Activated CD4-positive, alpha-beta T cell treated with anti-CD3 and anti-CD28 coated beads for 36 hours (primary cell): ENCODE measurements at regions of chr16 and their contacts with region 1.

Region 1: GRCh38 chr16:85821441-85822135 is 22.1 kb downstream of the COX4I1 start:
- DNase-seq: peak; percentile 90
- ATAC-seq: peak; percentile 89
- H3K4me3 Mint-ChIP-seq: no peak overlapping the region
- H3K27ac Mint-ChIP-seq: no peak overlapping the region
- H3K4me1 Mint-ChIP-seq: peaks cover 11% of the 10 kb centered on the region
- H3K27me3 Mint-ChIP-seq: peaks cover 7% of the 10 kb centered on the region

Region 2: GRCh38 chr16:85675251-85675927 is 146.2 kb before region 1 on chr16:
- CTCF ChIA-PET with region 1: no interaction called
- POLR2A ChIA-PET with region 1: no interaction called
- intact Hi-C with region 1: no loop called
- DNase-seq: no peak
- ATAC-seq: no peak
- H3K4me3 Mint-ChIP-seq: no peak overlapping the region
- H3K27ac Mint-ChIP-seq: no peak overlapping the region
- H3K4me1 Mint-ChIP-seq: peaks cover 7% of the 10 kb centered on the region
- H3K27me3 Mint-ChIP-seq: no peaks in the 10 kb centered on the region

Region 3: GRCh38 chr16:85733155-85733834 is 88.3 kb before region 1 on chr16:
- CTCF ChIA-PET with region 1: no interaction called
- POLR2A ChIA-PET with region 1: no interaction called
- intact Hi-C with region 1: no loop called
- DNase-seq: no peak
- ATAC-seq: no peak
- H3K4me3 Mint-ChIP-seq: no peak overlapping the region
- H3K27ac Mint-ChIP-seq: no peak overlapping the region
- H3K4me1 Mint-ChIP-seq: peaks cover 17% of the 10 kb centered on the region
- H3K27me3 Mint-ChIP-seq: no peaks in the 10 kb centered on the region

Region 4: DNA sequence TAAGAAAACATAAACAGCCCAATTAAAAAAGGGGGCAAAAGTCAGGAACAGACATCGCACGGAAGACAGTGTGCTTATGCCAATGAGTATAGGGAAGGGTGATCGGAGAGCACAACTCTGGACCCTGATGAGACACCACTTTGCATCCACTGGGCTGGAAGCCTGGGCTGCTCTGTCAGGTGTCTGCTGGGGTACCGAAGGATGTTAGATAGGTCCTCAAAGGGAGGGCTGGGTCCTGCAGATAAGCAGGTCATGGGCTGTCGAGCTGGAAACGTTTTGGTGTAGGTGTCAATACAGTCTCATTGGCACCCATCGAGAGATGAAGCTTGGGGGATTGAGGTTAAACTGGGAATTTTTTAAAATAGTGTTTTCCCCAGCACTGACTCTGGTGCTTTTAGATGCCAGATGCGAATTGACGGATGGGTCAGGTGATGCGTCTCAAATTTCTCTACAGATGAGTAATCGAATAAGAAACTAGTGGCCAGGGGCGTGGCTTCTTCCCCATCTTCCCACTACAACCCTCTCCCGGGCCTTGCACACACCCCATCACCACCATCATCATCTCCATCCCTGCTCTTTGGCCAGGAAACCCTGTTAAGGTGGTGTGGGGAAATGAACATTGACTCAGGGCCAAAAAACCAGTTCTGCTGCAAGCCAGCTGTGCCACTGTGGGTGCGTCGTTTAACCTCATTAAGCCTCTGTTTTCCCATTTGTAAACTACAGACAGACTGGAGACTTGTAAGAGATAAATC is 29.6 kb after region 1 on chr16:
- CTCF ChIA-PET with region 1: interaction called, 13 read pairs
- POLR2A ChIA-PET with region 1: no interaction called
- intact Hi-C with region 1: no loop called
- DNase-seq: no peak
- ATAC-seq: no peak
- H3K4me3 Mint-ChIP-seq: no peak overlapping the region
- H3K27ac Mint-ChIP-seq: no peak overlapping the region
- H3K4me1 Mint-ChIP-seq: peaks cover 3% of the 10 kb centered on the region
- H3K27me3 Mint-ChIP-seq: peaks cover 7% of the 10 kb centered on the region

Region 5: DNA sequence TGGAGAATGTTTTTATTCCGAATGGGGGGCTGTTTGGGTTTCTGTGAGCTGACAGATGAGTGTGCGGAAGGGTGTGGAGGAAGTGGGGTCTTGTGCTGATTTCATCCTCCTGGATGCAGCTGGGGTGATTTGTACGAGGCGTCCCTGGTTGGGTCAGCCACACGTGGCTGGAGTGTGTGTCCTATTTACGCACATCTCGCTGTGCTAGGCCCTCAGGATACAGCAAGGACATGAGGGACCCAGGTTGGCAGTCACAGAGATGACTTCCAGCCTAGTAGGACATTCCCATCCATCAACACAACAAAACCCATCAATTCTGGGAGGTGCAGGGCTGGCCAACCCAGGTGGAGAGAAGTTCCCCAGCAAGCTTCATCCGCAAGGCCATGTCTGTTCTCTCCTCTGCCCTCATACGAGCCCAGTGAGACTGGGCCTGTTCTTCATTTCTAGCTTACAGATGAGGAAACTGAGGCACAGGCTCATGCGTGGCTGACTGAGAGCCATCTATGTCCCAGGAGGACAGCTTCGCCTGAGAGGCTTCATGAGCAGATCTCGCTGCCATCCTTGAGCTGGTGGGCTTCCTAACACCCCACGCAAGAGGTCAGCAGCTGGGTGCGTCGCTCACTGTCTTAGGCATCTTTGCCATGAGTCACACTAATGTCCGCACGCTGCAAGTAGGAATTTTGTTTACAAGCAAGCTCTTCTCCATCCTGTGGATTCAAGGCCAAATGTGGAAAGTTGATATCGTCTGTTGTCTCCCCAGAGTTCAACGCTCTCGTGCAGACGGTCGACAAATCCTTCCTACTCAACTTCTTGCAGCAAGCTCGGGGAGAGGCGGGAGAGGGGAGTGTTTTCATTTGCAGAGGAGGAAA is 101.8 kb after region 1 on chr16:
- CTCF ChIA-PET with region 1: interaction called, 14 read pairs
- POLR2A ChIA-PET with region 1: no interaction called
- intact Hi-C with region 1: no loop called
- DNase-seq: peak; percentile 26
- ATAC-seq: peak; percentile 12
- H3K4me3 Mint-ChIP-seq: no peak overlapping the region
- H3K27ac Mint-ChIP-seq: peak overlapping the region; percentile 58
- H3K4me1 Mint-ChIP-seq: peaks cover 39% of the 10 kb centered on the region
- H3K27me3 Mint-ChIP-seq: peaks cover 6% of the 10 kb centered on the region

Region 6: DNA sequence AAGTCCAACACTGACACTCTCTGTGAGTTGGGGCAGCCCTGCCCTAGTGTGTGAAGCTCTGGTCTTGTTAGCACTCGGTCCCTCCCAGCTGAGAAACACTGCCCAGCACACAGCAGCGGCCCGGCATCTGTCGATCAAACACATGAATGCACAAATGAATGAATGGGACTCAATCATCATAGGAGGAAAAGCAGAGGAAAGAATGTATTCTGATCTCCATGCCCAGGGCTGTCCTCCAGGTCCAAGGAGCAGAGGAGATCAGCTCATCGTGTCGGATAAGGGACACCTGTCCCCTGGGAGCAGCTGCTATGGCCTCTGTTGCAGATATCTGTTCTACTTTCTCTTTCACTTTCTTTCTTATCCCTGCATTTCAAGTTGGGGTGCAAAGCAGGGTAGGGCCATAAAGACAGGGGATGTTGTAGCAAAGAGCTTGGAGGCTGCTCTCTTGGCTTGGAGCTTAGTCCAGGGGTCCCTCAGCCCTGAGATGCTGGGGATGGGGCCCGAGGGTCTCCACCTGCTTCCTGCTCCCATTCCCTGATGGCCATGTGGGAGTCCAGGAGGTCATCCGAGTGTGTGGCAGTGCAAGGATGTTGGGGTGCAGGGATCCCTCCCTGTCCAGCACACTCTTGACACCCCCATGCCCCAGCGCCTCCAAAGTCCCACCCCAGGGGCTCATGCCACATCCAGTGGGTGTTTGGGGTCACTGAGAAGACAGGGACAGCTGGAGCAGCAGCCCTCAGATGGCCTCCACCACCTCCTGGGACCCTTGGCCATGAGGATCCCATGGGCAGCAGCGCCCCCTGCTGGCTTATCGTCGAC is 165.6 kb after region 1 on chr16:
- CTCF ChIA-PET with region 1: interaction called, 120 read pairs
- POLR2A ChIA-PET with region 1: interaction called, 5 read pairs
- intact Hi-C with region 1: loop called (anchors 1 kb)
- DNase-seq: peak; percentile 76
- ATAC-seq: peak; percentile 16
- H3K4me3 Mint-ChIP-seq: no peak overlapping the region
- H3K27ac Mint-ChIP-seq: peak overlapping the region; percentile 99
- H3K4me1 Mint-ChIP-seq: peaks cover 78% of the 10 kb centered on the region
- H3K27me3 Mint-ChIP-seq: no peaks in the 10 kb centered on the region

Region 7: DNA sequence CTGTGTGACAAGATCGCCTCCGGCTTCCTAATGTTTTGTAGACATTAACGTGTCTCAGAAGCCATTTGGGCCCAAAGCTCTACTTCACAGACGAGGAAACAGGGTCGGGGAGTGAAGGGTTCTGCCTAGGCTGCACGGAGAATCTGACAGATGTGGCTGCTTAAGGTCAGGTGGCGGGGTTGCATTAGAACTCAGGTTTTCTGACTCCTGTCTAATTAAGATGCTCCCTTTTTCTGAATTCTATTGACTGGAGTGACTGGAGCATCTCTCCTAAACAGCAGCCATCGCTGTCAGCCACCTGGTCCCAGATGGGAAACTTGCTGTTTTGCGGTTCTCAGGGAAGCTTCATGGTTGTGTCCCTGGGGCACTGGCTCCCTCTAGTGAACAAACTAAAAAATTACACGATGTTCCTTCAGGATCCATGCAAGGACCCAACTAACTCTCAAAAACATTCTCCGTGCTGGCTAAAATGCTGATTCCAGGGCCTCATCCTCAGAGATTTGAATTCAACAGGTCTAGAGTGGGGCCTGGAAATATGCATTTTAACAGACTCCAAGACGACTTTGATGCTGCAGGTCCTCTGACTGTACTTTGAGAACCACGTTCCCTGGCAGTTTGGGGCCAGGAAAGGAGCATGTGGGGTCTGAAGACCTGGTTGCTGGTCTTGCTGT is 194.7 kb after region 1 on chr16:
- CTCF ChIA-PET with region 1: interaction called, 88 read pairs
- POLR2A ChIA-PET with region 1: no interaction called
- intact Hi-C with region 1: loop called (anchors 1 kb)
- DNase-seq: peak; percentile 64
- ATAC-seq: peak; percentile 75
- H3K4me3 Mint-ChIP-seq: no peak overlapping the region
- H3K27ac Mint-ChIP-seq: no peak overlapping the region
- H3K4me1 Mint-ChIP-seq: peaks cover 20% of the 10 kb centered on the region
- H3K27me3 Mint-ChIP-seq: peaks cover 34% of the 10 kb centered on the region

Region 8: DNA sequence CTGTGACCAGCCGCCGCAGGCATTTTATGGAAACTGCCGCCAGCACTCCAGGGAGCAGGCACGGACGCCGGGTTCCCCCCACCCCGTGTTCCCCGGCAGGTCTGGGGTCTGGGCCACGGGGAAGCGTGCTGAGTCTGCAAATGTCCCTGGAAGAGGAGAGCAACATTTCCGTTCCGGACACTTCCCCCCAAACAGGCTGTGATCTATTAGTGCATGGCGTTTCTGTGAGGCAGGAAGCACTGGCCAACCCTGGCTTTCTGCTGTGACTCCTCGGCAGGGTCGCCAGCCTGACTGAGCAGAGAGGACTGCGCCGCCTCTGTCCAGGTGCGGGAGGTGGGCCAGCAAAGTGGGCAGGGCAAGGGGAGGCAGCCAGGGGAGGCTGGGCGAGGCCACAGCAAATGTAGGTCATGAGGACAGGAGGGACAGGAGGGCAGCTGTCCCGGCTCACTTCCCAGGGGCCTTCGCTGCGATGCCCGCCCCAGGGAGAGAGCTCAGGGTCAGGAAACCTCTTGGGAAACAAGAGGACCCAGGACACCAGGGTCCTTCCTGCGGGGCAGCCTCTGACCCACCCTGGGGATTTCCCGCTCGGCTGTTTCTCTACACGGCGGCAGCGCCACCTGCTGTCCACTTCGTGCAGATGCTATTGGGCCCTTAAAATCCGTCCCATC is 698.2 kb after region 1 on chr16:
- CTCF ChIA-PET with region 1: interaction called, 6 read pairs
- POLR2A ChIA-PET with region 1: no interaction called
- intact Hi-C with region 1: loop called (anchors 2 to 5 kb)
- DNase-seq: peak; percentile 74
- ATAC-seq: peak; percentile 39
- H3K4me3 Mint-ChIP-seq: no peak overlapping the region
- H3K27ac Mint-ChIP-seq: no peak overlapping the region
- H3K4me1 Mint-ChIP-seq: peaks cover 3% of the 10 kb centered on the region
- H3K27me3 Mint-ChIP-seq: peaks cover 35% of the 10 kb centered on the region